Vagina (tissue), 2 donors: ENCODE measurements at regions of chr17 and their contacts with region 1.

Region 1: DNA sequence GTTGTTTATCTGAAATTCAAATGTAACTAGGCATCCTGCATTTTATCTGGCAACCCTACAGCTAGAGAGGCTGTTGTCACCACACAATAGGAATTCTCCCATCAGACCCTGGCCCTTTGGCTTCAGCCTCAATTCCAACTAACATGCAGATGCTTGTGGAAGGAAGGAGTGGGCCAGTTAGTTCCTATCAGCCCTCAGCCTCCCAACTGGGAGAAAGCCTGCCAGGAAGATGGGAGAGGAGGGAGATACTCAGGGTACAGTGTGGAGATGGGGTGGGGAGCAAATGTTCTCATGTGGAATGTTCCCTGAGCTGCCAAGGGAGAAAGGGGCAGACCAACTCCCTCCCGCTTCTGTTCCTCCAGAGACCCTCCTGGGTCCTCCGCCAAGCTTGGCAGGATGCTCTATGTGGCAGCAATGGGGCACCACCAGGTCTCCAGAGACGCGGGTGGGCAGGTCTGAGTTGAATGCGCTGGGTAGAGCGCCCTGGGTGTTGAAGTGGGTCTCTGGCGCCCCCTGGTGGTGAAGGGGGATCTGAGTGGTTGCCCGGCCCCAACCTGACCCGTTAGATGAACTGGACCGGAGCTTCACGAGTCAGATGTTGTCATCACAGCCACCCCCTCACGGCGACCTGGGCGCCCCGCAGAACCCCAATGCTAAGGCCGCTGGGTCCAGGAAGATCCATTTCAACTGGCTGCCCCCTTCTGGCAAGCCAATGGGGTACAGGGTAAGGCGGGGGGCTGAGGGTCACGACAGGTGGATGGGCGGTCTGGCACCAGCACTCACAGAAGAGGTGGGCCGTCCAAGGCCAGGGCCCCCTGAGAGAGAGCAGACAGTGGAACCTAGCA is 15.2 kb downstream of the GALK1 start:
- DNase-seq: no peak
- H3K4me3 ChIP-seq: no peak overlapping the region
- H3K27ac ChIP-seq: no peak overlapping the region
- H3K4me1 ChIP-seq: peaks cover 34% of the 10 kb centered on the region
- H3K27me3 ChIP-seq: no peaks in the 10 kb centered on the region
- CTCF ChIP-seq: peak; percentile 89 to 96 (median 95)
- POLR2A ChIP-seq: no peak

Region 2: DNA sequence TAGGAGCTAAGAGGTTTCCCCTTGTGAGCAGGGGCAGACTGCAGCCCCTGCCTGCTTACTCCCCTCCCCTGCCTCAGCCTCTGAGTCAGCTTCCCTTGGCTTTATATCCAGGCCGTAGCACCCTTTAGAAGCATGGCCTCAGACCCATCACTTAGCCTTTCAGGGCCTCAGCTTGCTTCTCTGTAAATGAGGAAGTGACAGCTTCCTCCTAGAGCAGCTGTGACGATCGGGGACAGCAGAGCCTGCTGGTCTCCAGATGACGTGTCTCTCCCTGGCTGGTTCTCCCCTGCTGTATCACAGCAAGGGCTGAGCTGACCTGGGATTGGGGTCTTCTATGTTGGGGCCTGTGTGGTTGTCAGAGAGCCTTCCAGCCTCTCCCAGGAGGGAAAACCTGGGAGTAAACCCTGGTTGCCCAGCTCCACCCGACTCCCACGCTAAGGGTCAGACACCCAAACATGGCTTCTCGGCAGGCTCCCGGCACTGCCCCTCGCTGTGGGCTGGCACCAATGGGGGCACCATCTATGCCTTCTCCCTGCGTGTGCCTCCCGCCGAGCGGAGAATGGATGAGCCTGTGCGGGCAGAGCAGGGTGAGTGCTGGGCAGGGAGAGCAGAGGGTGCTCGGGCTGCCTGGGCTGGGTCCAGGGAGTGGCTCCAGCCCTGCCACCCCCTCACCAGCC is 178.4 kb before region 1 on chr17:
- intact Hi-C with region 1: no loop called
- DNase-seq: no peak
- H3K4me3 ChIP-seq: no peak overlapping the region
- H3K27ac ChIP-seq: no peak overlapping the region
- H3K4me1 ChIP-seq: no peaks in the 10 kb centered on the region
- H3K27me3 ChIP-seq: no peaks in the 10 kb centered on the region
- CTCF ChIP-seq: no peak
- POLR2A ChIP-seq: no peak

Region 3: DNA sequence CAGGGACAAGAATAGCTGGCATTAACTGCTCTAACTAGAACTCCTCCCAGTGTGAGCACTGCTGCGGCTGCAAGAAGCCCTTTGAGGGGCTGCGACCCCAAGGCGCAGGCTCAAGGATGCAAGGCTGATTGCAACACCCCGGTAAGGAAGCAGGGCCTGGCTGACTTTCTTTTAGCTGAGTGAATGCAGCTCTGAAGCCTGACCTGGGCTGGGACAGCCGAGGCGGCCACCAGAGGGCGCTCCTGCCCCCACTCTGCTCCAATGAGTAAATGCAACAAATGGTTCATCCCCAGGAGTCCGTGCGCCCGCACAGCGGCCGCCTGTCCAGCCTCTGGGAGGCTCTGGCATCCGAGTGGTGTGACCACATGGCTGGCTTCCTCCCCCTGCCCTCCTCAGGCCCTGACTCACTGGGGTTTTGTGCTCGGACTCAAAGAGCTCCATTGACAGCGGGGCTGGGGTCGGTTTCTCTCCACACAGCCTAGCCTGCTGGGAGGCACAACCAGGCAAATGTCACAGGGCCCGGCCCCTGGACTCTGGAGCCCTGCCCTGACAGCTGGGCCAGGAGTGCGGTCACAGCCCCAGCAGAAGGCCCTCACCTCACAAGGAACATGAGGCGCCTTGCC is 116.8 kb before region 1 on chr17 and contains the start of gene SMIM5:
- intact Hi-C with region 1: loop called (anchors 5 kb)
- DNase-seq: peak in 1 of 2 donors; percentile 96
- H3K4me3 ChIP-seq: peak within 1 kb of the TSS; percentile 10 to 36
- H3K27ac ChIP-seq: peak within 1 kb of the TSS; percentile 89
- H3K4me1 ChIP-seq: peaks cover 25% of the 10 kb centered on the region
- H3K27me3 ChIP-seq: no peaks in the 10 kb centered on the region
- CTCF ChIP-seq: peak; percentile 86 to 94 (median 90)
- POLR2A ChIP-seq: no peak
- total RNA-seq, gene SMIM5: 2.2 TPM

Region 4: GRCh38 chr17:75673487-75673886 is 76.3 kb before region 1 on chr17:
- intact Hi-C with region 1: loop called (anchors 5 kb)
- DNase-seq: no peak
- H3K4me3 ChIP-seq: no peak overlapping the region
- H3K27ac ChIP-seq: no peak overlapping the region
- H3K4me1 ChIP-seq: peaks cover 4% of the 10 kb centered on the region
- H3K27me3 ChIP-seq: no peaks in the 10 kb centered on the region
- CTCF ChIP-seq: no peak
- POLR2A ChIP-seq: no peak